GM12878 (cell line): ENCODE measurements at regions of chr10 and their contacts with region 1.

Region 1: DNA sequence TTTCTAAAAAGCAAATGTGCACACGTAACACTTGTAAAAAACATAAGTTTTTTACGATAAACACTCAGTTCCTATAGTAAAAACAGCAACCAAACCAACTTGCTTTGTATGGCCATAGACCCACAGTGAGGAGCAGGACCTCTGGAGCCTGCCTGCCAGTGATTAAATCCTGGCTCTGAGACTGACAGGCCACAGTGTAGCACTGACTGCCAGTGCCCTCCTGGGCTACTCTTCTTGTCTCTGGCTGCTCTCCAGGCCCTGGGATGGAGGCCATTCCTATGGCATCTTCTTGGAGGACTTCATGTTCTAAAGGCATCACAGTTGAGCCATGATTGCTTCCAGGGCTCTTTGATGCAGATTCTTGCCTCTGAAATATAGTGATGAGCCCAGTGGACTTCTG is 22.7 kb upstream of the TMEM254 start:
- DNase-seq: no peak
- ATAC-seq: no peak
- H3K4me3 ChIP-seq: no peak overlapping the region
- H3K27ac ChIP-seq: no peak overlapping the region
- H3K4me1 ChIP-seq: no peaks in the 10 kb centered on the region
- H3K27me3 ChIP-seq: no peaks in the 10 kb centered on the region
- CTCF ChIP-seq: no peak
- EP300 ChIP-seq: no peak
- POLR2A ChIP-seq: no peak
- RAD21 ChIP-seq: no peak

Region 2: GRCh38 chr10:79883986-79884385 is 171.8 kb before region 1 on chr10:
- CTCF ChIA-PET with region 1: no interaction called
- POLR2A ChIA-PET with region 1: no interaction called
- RAD21 ChIA-PET with region 1: no interaction called
- SMC1A ChIA-PET with region 1: no interaction called
- in situ Hi-C with region 1: no loop called
- intact Hi-C with region 1: no loop called
- DNase-seq: no peak
- ATAC-seq: no peak
- H3K4me3 ChIP-seq: no peak overlapping the region
- H3K27ac ChIP-seq: no peak overlapping the region
- H3K4me1 ChIP-seq: no peaks in the 10 kb centered on the region
- H3K27me3 ChIP-seq: no peaks in the 10 kb centered on the region; a peak in 1 of 4 replicates
- CTCF ChIP-seq: no peak
- EP300 ChIP-seq: no peak
- POLR2A ChIP-seq: no peak
- RAD21 ChIP-seq: no peak

Region 3: GRCh38 chr10:80070057-80070456 is 14.3 kb after region 1 on chr10:
- CTCF ChIA-PET with region 1: interaction called, 22 read pairs
- POLR2A ChIA-PET with region 1: no interaction called
- RAD21 ChIA-PET with region 1: no interaction called
- SMC1A ChIA-PET with region 1: interaction called, 4 read pairs
- in situ Hi-C with region 1: no loop called
- intact Hi-C with region 1: no loop called
- DNase-seq: no peak
- ATAC-seq: no peak
- H3K4me3 ChIP-seq: no peak overlapping the region
- H3K27ac ChIP-seq: no peak overlapping the region
- H3K4me1 ChIP-seq: no peaks in the 10 kb centered on the region
- H3K27me3 ChIP-seq: no peaks in the 10 kb centered on the region
- CTCF ChIP-seq: no peak
- EP300 ChIP-seq: no peak
- POLR2A ChIP-seq: no peak
- RAD21 ChIP-seq: no peak

Region 4: GRCh38 chr10:80260295-80261243 is 204.8 kb after region 1 on chr10:
- CTCF ChIA-PET with region 1: interaction called, 3 read pairs
- POLR2A ChIA-PET with region 1: no interaction called
- RAD21 ChIA-PET with region 1: no interaction called
- SMC1A ChIA-PET with region 1: no interaction called
- in situ Hi-C with region 1: no loop called
- intact Hi-C with region 1: loop called (anchors 5 kb)
- DNase-seq: no peak
- ATAC-seq: peak; percentile 74
- H3K4me3 ChIP-seq: no peak overlapping the region
- H3K27ac ChIP-seq: no peak overlapping the region
- H3K4me1 ChIP-seq: no peaks in the 10 kb centered on the region
- H3K27me3 ChIP-seq: peaks cover 0 to 3% of the 10 kb centered on the region in 2 experiments; a peak in 1 of 4 replicates
- CTCF ChIP-seq: peak; percentile 83 to 94 (median 85)
- EP300 ChIP-seq: no peak
- POLR2A ChIP-seq: no peak
- RAD21 ChIP-seq: peak; percentile 71